Ascending aorta (tissue), 2 donors: ENCODE measurements at regions of chr11 and their contacts with region 1.

Region 1: DNA sequence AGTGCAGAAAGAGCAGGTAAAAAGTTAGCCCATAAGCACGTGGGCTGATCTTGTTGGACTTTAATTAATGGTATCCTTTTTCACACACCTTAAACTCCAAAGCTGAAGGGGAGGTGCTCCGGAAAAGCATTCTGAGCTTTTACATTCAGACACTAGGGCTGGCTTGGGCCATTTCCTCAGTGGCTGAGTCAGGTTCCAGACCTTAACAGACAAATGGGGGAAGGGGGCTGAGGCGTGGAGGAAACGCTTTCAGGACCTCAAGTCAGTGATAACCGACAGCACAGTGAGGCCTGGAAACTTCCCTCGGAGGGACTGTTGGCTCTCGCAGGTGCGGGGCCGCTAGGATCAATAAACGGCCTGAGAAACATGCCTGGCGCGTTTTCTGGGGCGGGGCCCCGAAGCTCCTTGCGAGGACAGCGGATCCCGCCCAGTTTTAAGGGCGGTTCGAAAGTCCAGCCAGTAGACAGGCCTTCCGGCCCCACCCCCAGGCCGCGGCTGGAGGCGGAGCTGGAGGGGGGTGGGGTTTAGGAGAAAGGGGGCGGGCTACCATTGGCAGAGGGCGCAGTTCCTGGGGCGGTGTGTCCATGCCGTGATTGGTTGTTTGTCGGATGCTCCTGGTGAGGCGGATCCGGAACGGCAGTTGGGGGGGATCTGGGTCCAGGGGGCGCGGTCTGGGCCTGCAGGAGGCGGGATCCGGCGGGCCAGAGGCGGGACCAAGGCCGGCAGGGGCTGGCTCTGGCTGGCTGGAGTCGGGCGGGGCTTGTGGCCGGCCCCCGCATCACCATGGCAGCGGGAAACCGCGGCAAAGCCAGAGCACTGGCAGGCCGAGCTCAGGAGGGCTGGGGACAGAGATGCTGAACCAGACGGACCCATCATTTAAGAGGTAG is 8.0 kb downstream of the C11orf52 start:
- DNase-seq: peak; percentile 92 to 98
- H3K4me3 ChIP-seq: peak overlapping the region; percentile 40 to 57
- H3K27ac ChIP-seq: peak overlapping the region; percentile 89 to 92
- H3K4me1 ChIP-seq: peaks cover 14 to 40% of the 10 kb centered on the region in 2 donors
- H3K27me3 ChIP-seq: no peaks in the 10 kb centered on the region
- CTCF ChIP-seq: no peak

Region 2: GRCh38 chr11:111878849-111879636 is 47.7 kb before region 1 on chr11 and contains the starts of genes CFAP68 and FDXACB1:
- intact Hi-C with region 1: loop called (anchors 1 kb)
- DNase-seq: peak; percentile 89 to 99
- H3K4me3 ChIP-seq: peak within 1 kb of the TSS; percentile 71 to 74
- H3K27ac ChIP-seq: peak within 1 kb of the TSS; percentile 90 to 97
- H3K4me1 ChIP-seq: peaks cover 0 to 11% of the 10 kb centered on the region in 2 donors
- H3K27me3 ChIP-seq: no peaks in the 10 kb centered on the region
- CTCF ChIP-seq: peak; percentile 97 to 98 (median 98)
- total RNA-seq, gene CFAP68: not detected
- total RNA-seq, gene FDXACB1: 0.53 TPM

Region 3: GRCh38 chr11:112016765-112017356 is 90.1 kb after region 1 on chr11:
- intact Hi-C with region 1: loop called (anchors 5 kb)
- DNase-seq: peak in 1 of 2 donors; percentile 74
- H3K4me3 ChIP-seq: no peak overlapping the region
- H3K27ac ChIP-seq: peak overlapping the region; percentile 83 to 85
- H3K4me1 ChIP-seq: peaks cover 0 to 17% of the 10 kb centered on the region in 2 donors
- H3K27me3 ChIP-seq: no peaks in the 10 kb centered on the region
- CTCF ChIP-seq: no peak

Region 4: DNA sequence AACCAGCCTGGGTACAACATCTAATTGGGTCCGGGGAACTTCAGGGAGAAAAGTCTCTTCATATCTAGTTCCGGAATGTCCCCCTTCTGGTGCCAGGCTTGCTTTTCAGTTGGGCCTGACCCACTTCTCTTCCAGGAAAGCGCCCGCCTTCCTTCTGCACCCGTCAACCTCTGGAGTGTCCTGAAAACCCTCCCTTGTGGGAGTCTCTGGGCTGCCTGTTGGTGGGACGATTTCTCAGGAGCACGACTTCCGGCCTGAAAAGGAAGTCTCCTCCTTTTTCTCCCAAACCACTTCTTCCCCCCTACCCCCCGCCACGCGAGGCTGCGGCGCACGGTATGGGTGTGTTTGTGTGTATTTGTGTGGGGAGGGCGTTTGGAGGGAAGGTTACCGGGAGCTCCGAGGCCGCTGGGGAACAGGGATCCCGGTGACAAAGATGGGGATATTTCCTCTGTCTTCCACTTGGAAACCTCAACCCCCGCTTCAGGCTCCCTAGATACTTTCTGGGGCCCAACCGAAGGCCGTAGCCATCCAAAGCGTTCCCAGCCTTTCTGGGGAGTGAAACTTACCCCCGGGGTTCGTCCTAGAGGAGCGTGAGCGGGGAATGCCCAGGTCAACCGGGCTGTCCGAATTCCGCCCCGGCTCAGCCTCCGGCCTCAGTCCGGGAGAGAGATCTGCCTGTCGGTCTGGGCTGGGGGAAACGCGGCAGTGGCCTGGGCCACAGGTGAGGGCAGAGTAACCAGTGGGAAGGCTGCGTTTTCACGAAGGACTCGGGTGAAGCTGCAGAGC is 147.5 kb after region 1 on chr11 and contains the start of gene NKAPD1:
- intact Hi-C with region 1: loop called (anchors 5 kb)
- DNase-seq: peak; percentile 26 to 91
- H3K4me3 ChIP-seq: peak within 1 kb of the TSS; percentile 78 to 82
- H3K27ac ChIP-seq: peak within 1 kb of the TSS; percentile 87 to 92
- H3K4me1 ChIP-seq: peaks cover 0 to 6% of the 10 kb centered on the region in 2 donors
- H3K27me3 ChIP-seq: no peaks in the 10 kb centered on the region
- CTCF ChIP-seq: peak in 1 of 3 experiments; percentile 6
- total RNA-seq, gene NKAPD1: 12.2 TPM

Region 5: GRCh38 chr11:112086422-112087191 is 159.9 kb after region 1 on chr11 and contains the starts of genes SDHD and TIMM8B:
- intact Hi-C with region 1: loop called (anchors 2 kb)
- DNase-seq: peak; percentile 85 to 98
- H3K4me3 ChIP-seq: peak within 1 kb of the TSS; percentile 86 to 94
- H3K27ac ChIP-seq: peak within 1 kb of the TSS; percentile 63 to 75
- H3K4me1 ChIP-seq: peaks cover 5 to 23% of the 10 kb centered on the region in 2 donors
- H3K27me3 ChIP-seq: no peaks in the 10 kb centered on the region
- CTCF ChIP-seq: peak in 2 of 3 experiments; percentile 34 to 36
- total RNA-seq, gene SDHD: 68.5 TPM
- total RNA-seq, gene TIMM8B: 28.9 TPM